ENCODE measurements at regions of chr1 and their contacts with region 1.

Region 1: DNA sequence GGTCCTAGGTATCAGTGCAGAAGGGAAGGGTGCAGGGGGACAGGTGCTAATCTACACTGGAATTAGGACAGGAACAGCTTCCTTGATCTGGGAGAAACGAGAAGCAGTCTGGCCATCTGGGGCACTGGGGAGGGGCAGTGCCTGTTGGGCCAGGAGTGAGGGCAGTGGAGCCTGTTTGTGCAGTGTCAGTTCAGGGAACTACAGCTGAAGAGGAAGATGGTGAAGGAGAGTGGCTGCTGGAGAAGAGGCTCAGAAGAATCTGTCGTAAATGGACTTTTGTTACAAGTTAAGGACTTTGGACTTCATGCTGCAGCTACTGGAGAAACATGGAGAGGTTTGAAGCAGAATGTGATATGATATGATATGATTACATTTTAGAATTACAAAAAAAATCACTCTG is 3.2 kb upstream of the TNFSF4 start:
- DNase-seq: no peak

Region 2: GRCh38 chr1:173190101-173190906 is 20.0 kb before region 1 on chr1:
- intact Hi-C with region 1: loop called in 1 of 2 experiments (anchors 2 kb)
- DNase-seq: peak; percentile 89